CD4-positive, alpha-beta T cell (primary cell): ENCODE measurements at regions of chr1 and their contacts with region 1.

Region 1: GRCh38 chr1:110766025-110766647 is 91.4 kb upstream of the KCNA3 start:
- DNase-seq: peak; percentile 22 to 87 (median 44)
- ATAC-seq: peak; percentile 82
- H3K4me3 ChIP-seq: no peak overlapping the region
- H3K4me3 Mint-ChIP-seq: no peak overlapping the region
- H3K27ac ChIP-seq: no peak overlapping the region
- H3K27ac Mint-ChIP-seq: no peak overlapping the region
- H3K4me1 ChIP-seq: peaks cover 4% of the 10 kb centered on the region
- H3K4me1 Mint-ChIP-seq: peaks cover 5% of the 10 kb centered on the region
- H3K27me3 ChIP-seq: no peaks in the 10 kb centered on the region
- H3K27me3 Mint-ChIP-seq: peaks cover 5% of the 10 kb centered on the region
- CTCF ChIP-seq: peak; percentile 93

Region 2: GRCh38 chr1:110524311-110525251 is 241.6 kb before region 1 on chr1:
- CTCF ChIA-PET with region 1: no interaction called
- POLR2A ChIA-PET with region 1: no interaction called
- intact Hi-C with region 1: loop called (anchors 1 to 10 kb)
- DNase-seq: peak; percentile 11 to 76 (median 30)
- ATAC-seq: peak; percentile 66
- H3K4me3 ChIP-seq: no peak overlapping the region
- H3K4me3 Mint-ChIP-seq: no peak overlapping the region
- H3K27ac ChIP-seq: no peak overlapping the region
- H3K27ac Mint-ChIP-seq: no peak overlapping the region
- H3K4me1 ChIP-seq: peaks cover 8% of the 10 kb centered on the region
- H3K4me1 Mint-ChIP-seq: no peaks in the 10 kb centered on the region
- H3K27me3 ChIP-seq: peaks cover 0 to 10% of the 10 kb centered on the region in 2 experiments
- H3K27me3 Mint-ChIP-seq: peaks cover 38% of the 10 kb centered on the region
- CTCF ChIP-seq: peak; percentile 58

Region 3: DNA sequence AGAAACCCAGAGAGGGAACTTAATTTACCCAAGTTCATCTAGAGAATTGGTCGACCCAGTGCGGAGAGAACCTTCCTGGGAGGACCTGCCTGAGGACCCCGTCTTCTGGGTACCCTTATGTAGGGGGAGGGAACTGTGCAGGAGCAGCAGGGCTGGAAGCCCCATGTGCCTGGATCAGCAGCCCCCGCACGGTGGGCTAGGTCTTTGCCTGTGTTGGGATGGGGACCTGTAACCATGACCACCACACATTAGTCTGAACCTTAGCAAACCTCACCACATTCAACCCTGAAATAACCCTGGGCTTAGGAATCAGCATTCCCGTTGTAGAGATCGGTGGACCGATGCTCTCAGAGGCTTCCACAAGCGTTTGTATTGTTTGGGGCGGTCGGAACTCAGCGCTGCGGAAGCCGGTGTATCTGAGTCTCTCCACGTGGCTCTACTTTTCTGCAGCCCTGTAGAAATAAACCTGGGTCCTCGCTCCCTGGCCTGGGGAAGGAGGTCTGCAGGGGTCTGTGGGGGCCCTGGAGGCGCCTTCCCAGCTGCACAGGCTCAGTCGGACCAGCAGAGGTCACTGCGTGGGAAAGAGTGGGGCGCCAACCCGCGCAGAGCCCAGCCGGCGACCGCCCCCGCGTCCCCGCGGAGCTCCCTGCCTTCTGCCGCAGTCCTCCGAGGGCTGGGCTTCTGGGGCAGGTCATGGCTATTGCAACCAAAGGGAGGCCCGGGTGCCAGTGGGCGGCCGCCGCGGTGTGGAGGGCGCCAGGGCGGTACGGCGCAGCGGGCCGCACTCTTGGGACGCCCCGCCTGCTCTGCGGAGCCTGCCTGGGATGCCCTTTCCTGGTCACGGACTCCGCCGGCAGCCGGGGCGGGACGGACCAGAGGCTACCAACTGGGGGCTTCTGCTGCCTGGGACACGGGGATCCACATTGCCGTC is 211.0 kb before region 1 on chr1:
- CTCF ChIA-PET with region 1: interaction called, 11 read pairs
- POLR2A ChIA-PET with region 1: no interaction called
- intact Hi-C with region 1: loop called (anchors 1 to 5 kb)
- DNase-seq: peak; percentile 27 to 77 (median 46)
- ATAC-seq: peak; percentile 94
- H3K4me3 ChIP-seq: no peak overlapping the region
- H3K4me3 Mint-ChIP-seq: no peak overlapping the region
- H3K27ac ChIP-seq: no peak overlapping the region
- H3K27ac Mint-ChIP-seq: no peak overlapping the region
- H3K4me1 ChIP-seq: peaks cover 11% of the 10 kb centered on the region
- H3K4me1 Mint-ChIP-seq: no peaks in the 10 kb centered on the region
- H3K27me3 ChIP-seq: peaks cover 34 to 62% of the 10 kb centered on the region in 2 experiments
- H3K27me3 Mint-ChIP-seq: peaks cover 72% of the 10 kb centered on the region
- CTCF ChIP-seq: peak; percentile 77